ENCODE measurements at regions of chr17 and their contacts with region 1.

Region 1: DNA sequence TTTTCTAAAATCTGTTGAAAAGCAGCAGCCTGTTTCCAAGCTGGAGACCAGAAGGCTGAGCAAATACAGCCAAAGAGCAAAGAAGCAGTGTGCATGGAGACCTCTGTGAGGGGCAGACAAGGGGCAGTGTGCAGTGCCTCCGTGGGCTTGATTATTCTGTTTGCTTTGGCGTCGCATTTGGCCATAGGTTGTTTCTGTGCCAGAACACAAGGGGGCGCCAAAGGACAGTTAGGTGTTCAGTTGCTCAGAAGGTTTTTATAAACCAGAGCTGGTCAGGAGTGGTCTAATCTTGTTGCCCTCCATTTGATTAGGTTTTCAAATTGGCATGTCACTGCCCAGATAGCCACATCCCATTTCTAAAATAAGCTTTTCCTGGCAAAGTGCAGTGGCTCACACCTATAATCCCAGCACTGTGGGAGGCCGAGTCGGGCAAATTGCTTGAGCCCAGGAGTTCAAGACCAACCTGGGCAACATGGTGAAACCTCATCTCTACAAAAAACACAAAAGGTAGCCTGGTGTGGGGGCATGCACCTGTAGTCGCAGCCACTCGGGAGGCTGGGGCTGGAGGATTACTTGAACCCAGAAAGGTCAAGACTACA is 10.6 kb downstream of the MYH3 start:
- DNase-seq: peak; percentile 60
- H3K4me3 Mint-ChIP-seq: no peak overlapping the region
- H3K27ac Mint-ChIP-seq: no peak overlapping the region
- H3K4me1 Mint-ChIP-seq: no peaks in the 10 kb centered on the region
- H3K27me3 Mint-ChIP-seq: no peaks in the 10 kb centered on the region

Region 2: GRCh38 chr17:10631048-10631700 is 15.3 kb before region 1 on chr17:
- intact Hi-C with region 1: no loop called
- DNase-seq: no peak
- H3K4me3 Mint-ChIP-seq: no peak overlapping the region
- H3K27ac Mint-ChIP-seq: no peak overlapping the region
- H3K4me1 Mint-ChIP-seq: peaks cover 9% of the 10 kb centered on the region
- H3K27me3 Mint-ChIP-seq: no peaks in the 10 kb centered on the region

Region 3: DNA sequence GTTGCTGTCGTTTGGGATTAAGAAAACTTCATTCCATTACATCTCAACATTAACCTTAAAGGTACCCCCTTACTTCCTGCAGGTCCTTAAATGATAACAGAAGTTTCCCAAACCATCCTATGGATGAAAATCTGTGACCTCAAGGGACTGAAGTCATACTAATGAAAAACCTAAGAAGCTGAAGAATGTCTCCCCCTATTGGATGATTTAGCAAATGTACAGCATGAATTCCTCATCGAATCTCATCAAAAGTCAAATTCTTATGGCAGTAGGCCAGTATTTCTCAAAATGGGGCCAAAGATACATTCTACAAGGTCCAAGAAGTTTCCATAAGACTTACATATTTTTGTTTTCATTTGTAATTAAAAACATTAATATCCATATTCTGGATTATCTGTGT is 37.4 kb after region 1 on chr17:
- intact Hi-C with region 1: loop called (anchors 1 kb)
- DNase-seq: no peak
- H3K4me3 Mint-ChIP-seq: no peak overlapping the region
- H3K27ac Mint-ChIP-seq: no peak overlapping the region
- H3K4me1 Mint-ChIP-seq: peaks cover 7% of the 10 kb centered on the region
- H3K27me3 Mint-ChIP-seq: no peaks in the 10 kb centered on the region

Region 4: DNA sequence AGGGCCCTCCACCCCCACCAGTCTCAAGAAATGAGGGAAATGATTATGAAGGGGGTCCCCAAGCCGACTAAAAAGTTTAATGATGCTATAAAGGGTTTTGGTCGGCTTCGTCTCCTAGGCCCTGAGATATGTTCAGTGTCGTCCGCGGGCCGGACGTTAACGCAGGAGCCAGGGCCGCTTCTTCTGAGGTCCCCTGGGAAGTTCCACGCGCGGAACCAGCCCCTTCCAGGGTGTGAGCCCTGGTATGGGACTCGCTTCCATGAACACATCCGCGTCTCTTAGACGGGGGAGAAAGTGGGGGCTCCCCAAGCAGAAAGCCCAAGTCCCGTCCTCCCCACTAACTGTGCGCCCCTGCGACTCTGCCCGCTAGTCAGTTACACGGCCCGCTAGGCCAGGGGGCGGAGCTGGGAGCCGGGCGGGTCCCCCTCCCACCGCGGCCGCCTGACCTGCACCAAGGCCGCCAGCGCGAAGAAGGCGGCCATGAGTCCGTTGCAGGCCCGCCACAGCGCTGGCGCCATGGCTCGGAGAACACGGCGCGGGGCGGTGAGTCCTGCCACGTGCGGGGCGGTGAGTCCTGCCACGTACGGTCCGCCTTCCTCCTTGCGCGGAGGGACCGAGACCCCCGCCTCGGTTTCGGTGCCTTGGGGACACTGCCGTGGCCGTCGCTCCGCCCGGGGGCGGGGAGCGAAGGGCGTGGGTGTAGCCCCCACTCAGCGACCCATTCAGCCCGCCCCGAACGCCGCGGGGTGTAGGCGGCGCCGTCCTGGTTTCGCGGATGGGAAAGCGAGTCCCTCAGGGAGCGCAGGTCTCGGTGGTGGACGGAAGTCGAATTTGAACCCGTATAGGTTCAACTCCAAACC is 83.1 kb after region 1 on chr17 and contains the start of gene TMEM220:
- intact Hi-C with region 1: loop called (anchors 5 kb)
- DNase-seq: peak; percentile 10
- H3K4me3 Mint-ChIP-seq: peak within 1 kb of the TSS; percentile 93
- H3K27ac Mint-ChIP-seq: peak within 1 kb of the TSS; percentile 61
- H3K4me1 Mint-ChIP-seq: peaks cover 13% of the 10 kb centered on the region
- H3K27me3 Mint-ChIP-seq: peaks cover 15% of the 10 kb centered on the region
- total RNA-seq, gene TMEM220: 0.98 and 1.3 TPM in 2 replicates